ENCODE measurements at regions of chr7 and their contacts with region 1.

Region 1: DNA sequence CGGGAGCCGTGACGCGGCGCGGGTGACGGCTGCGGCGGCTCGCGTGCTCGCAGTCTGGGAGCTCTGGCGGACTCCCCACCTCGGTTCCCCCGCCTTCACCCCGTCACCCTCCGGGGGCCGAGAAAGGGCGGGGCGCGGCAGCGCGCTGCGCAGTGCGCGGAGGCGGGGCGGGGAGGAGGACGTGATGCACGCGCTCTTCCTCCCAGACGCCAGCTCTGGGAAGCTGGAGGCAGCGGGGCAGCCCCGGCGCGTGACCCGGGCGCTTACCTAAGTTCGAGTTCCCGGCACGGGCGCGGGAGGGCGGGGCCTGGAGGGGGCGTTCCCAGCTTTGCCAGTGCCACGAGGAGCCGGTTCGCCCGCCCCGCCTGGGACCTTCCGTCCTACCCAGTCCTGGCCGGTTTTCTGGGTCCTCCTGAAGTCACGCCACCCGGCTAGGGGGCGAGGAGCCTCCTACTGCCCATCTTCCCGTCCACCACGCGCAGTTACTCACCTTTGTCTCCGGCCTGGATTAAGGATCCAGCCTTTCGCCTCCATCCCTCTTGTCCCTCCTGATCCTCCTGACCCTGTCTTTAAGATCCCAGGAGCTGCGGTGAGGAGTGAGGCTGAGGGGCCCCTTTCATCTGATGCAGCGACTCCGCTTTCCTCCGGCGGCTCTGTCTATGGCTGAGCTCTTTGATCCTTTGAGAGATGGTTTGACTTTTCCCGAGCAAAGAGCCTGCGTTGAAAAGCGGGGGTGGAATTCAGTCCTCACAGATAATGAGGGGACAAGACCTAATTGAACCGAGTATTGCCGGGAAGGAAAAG is 470 bp upstream of the NAMPT start:
- DNase-seq: peak; percentile 93 to 99 (median 97)
- H3K4me3 ChIP-seq: peak overlapping the region; percentile 86 to 97
- H3K4me3 Mint-ChIP-seq: peak overlapping the region; percentile 95 to 98 (median 96)
- H3K27ac ChIP-seq: peak overlapping the region; percentile 95
- H3K27ac Mint-ChIP-seq: peak overlapping the region; percentile 93 to 99 (median 98)
- H3K4me1 ChIP-seq: peaks cover 29% of the 10 kb centered on the region
- H3K4me1 Mint-ChIP-seq: peaks cover 14 to 28% (median 21%) of the 10 kb centered on the region in 4 donors
- H3K27me3 ChIP-seq: no peaks in the 10 kb centered on the region
- H3K27me3 Mint-ChIP-seq: no peaks in the 10 kb centered on the region

Region 2: GRCh38 chr7:106071356-106071998 is 213.8 kb before region 1 on chr7:
- CTCF ChIA-PET with region 1: no interaction called
- POLR2A ChIA-PET with region 1: interaction called, 10 read pairs
- intact Hi-C with region 1: no loop called
- DNase-seq: peak; percentile 54 to 69 (median 63)
- H3K4me3 ChIP-seq: peak overlapping the region in 1 of 2 donors; percentile 49
- H3K4me3 Mint-ChIP-seq: peak overlapping the region; percentile 73 to 86 (median 82)
- H3K27ac ChIP-seq: peak overlapping the region; percentile 52
- H3K27ac Mint-ChIP-seq: peak overlapping the region; percentile 86 to 95 (median 94)
- H3K4me1 ChIP-seq: peaks cover 43% of the 10 kb centered on the region
- H3K4me1 Mint-ChIP-seq: peaks cover 28 to 62% (median 42%) of the 10 kb centered on the region in 4 donors
- H3K27me3 ChIP-seq: no peaks in the 10 kb centered on the region
- H3K27me3 Mint-ChIP-seq: no peaks in the 10 kb centered on the region

Region 3: DNA sequence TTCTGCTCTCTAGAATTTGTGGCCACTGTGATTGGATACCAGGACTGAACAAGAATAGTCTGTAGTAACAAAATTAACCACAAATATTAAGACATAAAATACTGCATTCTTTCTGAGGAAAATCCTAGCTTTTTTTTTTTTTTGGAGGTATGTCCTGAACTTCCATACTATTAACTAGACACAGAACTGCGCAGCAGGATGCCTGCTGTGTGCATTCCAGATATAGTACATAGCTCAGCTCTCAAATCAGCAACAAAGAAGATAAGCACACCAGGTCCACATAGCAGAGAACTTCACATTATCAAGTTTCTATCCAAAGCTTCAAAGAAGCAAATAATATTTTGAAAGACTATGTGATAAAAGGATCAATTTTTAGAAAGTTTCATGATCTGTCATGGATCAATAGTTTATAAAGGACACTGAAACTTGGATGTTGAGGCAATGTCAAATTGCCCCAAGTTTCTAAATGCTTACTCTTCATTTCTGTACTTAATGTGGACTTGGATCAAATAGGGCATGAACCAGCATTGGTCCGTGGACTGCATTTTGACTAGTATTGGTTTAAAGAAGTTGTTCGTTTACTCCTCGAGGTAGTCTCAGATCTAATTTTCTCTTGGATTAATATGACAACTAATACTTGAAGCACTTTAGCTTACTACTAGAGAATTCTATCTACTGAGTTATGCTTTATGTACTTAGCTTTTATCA is 15.8 kb before region 1 on chr7:
- CTCF ChIA-PET with region 1: no interaction called
- POLR2A ChIA-PET with region 1: no interaction called
- intact Hi-C with region 1: loop called (anchors 2 kb)
- DNase-seq: no peak
- H3K4me3 ChIP-seq: no peak overlapping the region
- H3K4me3 Mint-ChIP-seq: no peak overlapping the region
- H3K27ac ChIP-seq: no peak overlapping the region
- H3K27ac Mint-ChIP-seq: no peak overlapping the region
- H3K4me1 ChIP-seq: no peaks in the 10 kb centered on the region
- H3K4me1 Mint-ChIP-seq: no peaks in the 10 kb centered on the region
- H3K27me3 ChIP-seq: no peaks in the 10 kb centered on the region
- H3K27me3 Mint-ChIP-seq: no peaks in the 10 kb centered on the region

Region 4: GRCh38 chr7:106346678-106347217 is 61.5 kb after region 1 on chr7:
- CTCF ChIA-PET with region 1: no interaction called
- POLR2A ChIA-PET with region 1: interaction called, 9 read pairs
- intact Hi-C with region 1: loop called (anchors 1 kb)
- DNase-seq: peak; percentile 79 to 87 (median 81)
- H3K4me3 ChIP-seq: no peak overlapping the region
- H3K4me3 Mint-ChIP-seq: peak overlapping the region in 2 of 8 donors; percentile 44 to 51
- H3K27ac ChIP-seq: peak overlapping the region; percentile 13
- H3K27ac Mint-ChIP-seq: peak overlapping the region; percentile 54 to 88 (median 83)
- H3K4me1 ChIP-seq: peaks cover 26% of the 10 kb centered on the region
- H3K4me1 Mint-ChIP-seq: peaks cover 15 to 29% (median 22%) of the 10 kb centered on the region in 4 donors
- H3K27me3 ChIP-seq: no peaks in the 10 kb centered on the region
- H3K27me3 Mint-ChIP-seq: peaks cover 4 to 13% of the 10 kb centered on the region in 2 donors

Region 5: GRCh38 chr7:106425017-106425719 is 139.9 kb after region 1 on chr7:
- CTCF ChIA-PET with region 1: no interaction called
- POLR2A ChIA-PET with region 1: no interaction called
- intact Hi-C with region 1: no loop called
- DNase-seq: peak; percentile 20 to 56 (median 23)
- H3K4me3 ChIP-seq: no peak overlapping the region
- H3K4me3 Mint-ChIP-seq: peak overlapping the region in 3 of 8 donors; percentile 8 to 65 (median 42)
- H3K27ac ChIP-seq: no peak overlapping the region
- H3K27ac Mint-ChIP-seq: peak overlapping the region in 6 of 7 donors; percentile 6 to 88 (median 66)
- H3K4me1 ChIP-seq: peaks cover 12% of the 10 kb centered on the region
- H3K4me1 Mint-ChIP-seq: peaks cover 7 to 12% (median 10%) of the 10 kb centered on the region in 4 donors
- H3K27me3 ChIP-seq: no peaks in the 10 kb centered on the region
- H3K27me3 Mint-ChIP-seq: no peaks in the 10 kb centered on the region